Naive thymus-derived CD8-positive, alpha-beta T cell (primary cell): ENCODE measurements at regions of chr12 and their contacts with region 1.

Region 1: GRCh38 chr12:56104109-56104814 is at the start of gene PA2G4:
- DNase-seq: peak; percentile 82 to 99 (median 94)
- ATAC-seq: peak; percentile 88
- H3K4me3 Mint-ChIP-seq: peak within 1 kb of the TSS; percentile 93 to 100 (median 98)
- H3K27ac Mint-ChIP-seq: peak within 1 kb of the TSS; percentile 97 to 99 (median 98)
- H3K4me1 Mint-ChIP-seq: peaks cover 35 to 73% (median 62%) of the 10 kb centered on the region in 4 donors
- H3K27me3 Mint-ChIP-seq: no peaks in the 10 kb centered on the region
- polyA plus RNA-seq, gene PA2G4: 219 to 241 (median 241) TPM

Region 2: DNA sequence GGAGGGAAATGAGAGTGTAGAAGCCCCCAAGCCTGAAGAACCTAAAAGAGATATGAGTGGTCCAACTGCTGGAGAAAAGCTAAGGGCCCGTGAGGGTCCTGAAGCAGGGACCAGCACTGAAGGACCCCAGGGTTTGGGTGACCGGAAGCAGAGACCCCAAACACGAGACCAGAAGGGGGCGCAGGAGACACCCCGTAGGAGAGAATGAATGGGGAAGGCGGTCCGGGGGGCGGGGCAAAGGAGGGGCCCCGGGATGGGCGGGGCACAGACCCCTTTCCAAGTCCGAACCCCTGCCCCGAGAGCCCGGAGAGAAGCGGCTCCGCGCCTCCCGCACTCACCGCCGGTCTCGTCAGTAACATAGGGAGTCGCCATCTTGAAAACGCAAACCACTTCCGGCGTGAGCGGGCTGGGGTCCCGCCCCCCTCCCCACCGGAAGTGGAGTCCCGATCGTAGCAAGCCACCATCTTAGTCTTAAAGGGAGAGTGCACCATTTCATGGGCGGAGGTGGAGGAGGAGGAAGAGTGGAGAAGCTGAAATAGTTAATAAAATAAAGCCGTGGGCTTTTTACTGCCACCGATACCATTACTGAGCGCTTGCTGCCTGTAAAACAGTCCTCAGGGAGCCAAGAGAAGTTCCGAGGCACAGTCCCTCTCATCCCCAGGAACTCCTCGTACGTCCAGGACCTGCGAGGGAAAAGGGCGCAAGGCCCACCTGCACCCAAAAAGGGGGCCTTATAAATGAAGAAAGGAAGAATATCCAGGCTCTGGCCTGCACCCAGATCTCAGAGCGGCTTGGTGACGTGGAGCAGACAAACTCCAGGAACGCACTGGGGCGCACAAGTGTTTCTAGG is 177.3 kb before region 1 on chr12:
- POLR2A ChIA-PET with region 1: interaction called, 32 read pairs
- DNase-seq: peak; percentile 77 to 96 (median 88)
- ATAC-seq: peak; percentile 41 to 46
- H3K4me3 Mint-ChIP-seq: peak overlapping the region; percentile 92 to 100 (median 98)
- H3K27ac Mint-ChIP-seq: peak overlapping the region; percentile 95 to 100 (median 98)
- H3K4me1 Mint-ChIP-seq: peaks cover 34 to 67% (median 51%) of the 10 kb centered on the region in 4 donors
- H3K27me3 Mint-ChIP-seq: no peaks in the 10 kb centered on the region

Region 3: DNA sequence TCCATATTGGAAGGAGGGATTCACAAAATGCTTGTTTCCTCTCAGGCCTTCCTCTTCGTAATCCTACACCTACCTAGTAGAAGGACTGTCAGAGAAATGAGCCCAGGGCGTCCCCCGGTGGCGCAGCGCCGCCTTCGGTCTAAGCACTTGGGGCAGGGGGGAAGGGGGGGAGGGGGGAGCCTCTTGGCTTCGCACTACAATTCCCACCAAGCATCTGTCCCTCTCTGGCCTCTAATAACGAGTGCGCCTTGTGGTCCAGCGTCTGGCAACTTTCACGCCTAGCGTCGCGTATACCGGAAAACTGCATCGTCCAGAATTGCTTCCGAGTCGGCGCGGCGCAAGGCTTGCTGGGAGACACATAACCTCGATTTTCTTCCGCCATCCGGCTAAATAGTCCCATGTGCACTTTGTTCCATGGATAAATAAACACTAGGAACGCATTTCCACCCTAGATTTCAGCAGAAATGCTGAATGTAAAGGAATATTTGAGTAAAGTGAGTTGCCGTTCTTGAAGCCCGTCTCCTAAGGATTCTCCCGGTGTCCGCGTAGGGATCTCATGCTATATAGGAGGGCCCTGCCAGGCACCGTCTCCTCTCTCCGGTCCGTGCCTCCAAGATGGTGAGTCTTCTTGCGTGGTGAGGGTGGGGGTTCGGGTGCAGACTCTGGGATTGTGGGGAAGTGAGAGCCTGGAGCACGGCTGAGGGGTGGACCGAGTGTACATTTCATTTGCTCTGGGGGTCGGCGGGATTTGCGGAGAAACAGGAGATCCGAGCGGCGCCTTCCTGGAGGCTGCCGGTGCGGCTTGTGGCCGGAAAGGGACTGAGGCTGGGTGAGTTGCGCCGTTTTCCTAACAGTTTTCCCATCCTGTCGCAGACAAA is 62.5 kb before region 1 on chr12 and contains the start of gene RPS26:
- POLR2A ChIA-PET with region 1: interaction called, 38 read pairs
- DNase-seq: peak; percentile 81 to 98 (median 90)
- ATAC-seq: peak; percentile 89
- H3K4me3 Mint-ChIP-seq: peak within 1 kb of the TSS; percentile 90 to 100 (median 99)
- H3K27ac Mint-ChIP-seq: peak within 1 kb of the TSS; percentile 95 to 100 (median 99)
- H3K4me1 Mint-ChIP-seq: peaks cover 13 to 37% (median 32%) of the 10 kb centered on the region in 4 donors
- H3K27me3 Mint-ChIP-seq: no peaks in the 10 kb centered on the region
- polyA plus RNA-seq, gene RPS26: 743 to 1,060 (median 810) TPM

Region 4: GRCh38 chr12:56084958-56085543 is 19.2 kb before region 1 on chr12:
- POLR2A ChIA-PET with region 1: interaction called, 100 read pairs
- DNase-seq: peak in 1 of 10 donors; percentile 4
- ATAC-seq: peak in 1 of 2 donors; percentile 31
- H3K4me3 Mint-ChIP-seq: no peak overlapping the region
- H3K27ac Mint-ChIP-seq: peak overlapping the region in 2 of 10 donors; percentile 43 to 56
- H3K4me1 Mint-ChIP-seq: peaks cover 0 to 14% (median 8%) of the 10 kb centered on the region in 4 donors
- H3K27me3 Mint-ChIP-seq: peaks cover 0 to 6% (median 0%) of the 10 kb centered on the region in 5 donors

Region 5: GRCh38 chr12:56158029-56158925 is 54.0 kb after region 1 on chr12 and contains the start of gene MYL6:
- POLR2A ChIA-PET with region 1: interaction called, 11 read pairs
- DNase-seq: peak; percentile 72 to 97 (median 90)
- ATAC-seq: peak; percentile 85 to 87
- H3K4me3 Mint-ChIP-seq: peak within 1 kb of the TSS; percentile 93 to 99 (median 98)
- H3K27ac Mint-ChIP-seq: peak within 1 kb of the TSS; percentile 95 to 100 (median 98)
- H3K4me1 Mint-ChIP-seq: peaks cover 32 to 54% (median 49%) of the 10 kb centered on the region in 4 donors
- H3K27me3 Mint-ChIP-seq: no peaks in the 10 kb centered on the region
- polyA plus RNA-seq, gene MYL6: 1,813 to 2,533 (median 2,044) TPM

Region 6: GRCh38 chr12:56172831-56173230 is 68.6 kb after region 1 on chr12:
- POLR2A ChIA-PET with region 1: no interaction called
- DNase-seq: peak in 1 of 10 donors; percentile 4
- ATAC-seq: no peak
- H3K4me3 Mint-ChIP-seq: no peak overlapping the region
- H3K27ac Mint-ChIP-seq: peak overlapping the region in 3 of 10 donors; percentile 24 to 80 (median 29)
- H3K4me1 Mint-ChIP-seq: no peaks in the 10 kb centered on the region
- H3K27me3 Mint-ChIP-seq: no peaks in the 10 kb centered on the region

Region 7: DNA sequence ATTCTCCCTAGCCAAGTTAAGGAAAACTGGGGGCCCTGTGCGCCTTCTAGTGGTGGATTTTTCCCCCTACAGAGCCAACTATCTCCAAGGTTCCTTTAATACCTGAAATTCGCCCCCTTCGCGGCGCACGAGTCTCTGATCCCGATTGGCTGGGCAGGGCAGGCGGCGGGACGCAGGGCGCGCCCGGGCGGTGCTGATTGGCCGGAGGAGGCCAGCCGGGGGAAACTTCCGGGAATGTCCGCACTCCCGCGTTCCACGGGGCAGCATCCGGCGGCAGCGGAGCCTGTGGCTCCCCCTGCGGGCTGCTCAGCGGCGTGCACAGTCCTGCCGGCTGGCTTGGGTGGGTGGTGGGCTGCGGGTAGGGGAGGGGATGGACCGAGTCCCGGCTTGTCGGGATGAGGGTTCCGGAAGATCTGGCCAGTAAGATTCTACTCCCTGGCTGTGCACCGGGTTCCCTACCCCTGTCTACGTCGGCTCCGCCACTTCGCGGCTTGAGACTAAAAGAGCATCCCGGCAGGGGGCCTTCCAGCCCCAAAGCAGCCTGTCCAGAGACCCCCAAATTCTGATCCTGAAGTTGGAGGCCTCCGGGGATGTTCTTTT is 119.9 kb after region 1 on chr12 and contains the start of gene NABP2:
- POLR2A ChIA-PET with region 1: interaction called, 23 read pairs
- DNase-seq: peak; percentile 77 to 94 (median 86)
- ATAC-seq: peak; percentile 75 to 79
- H3K4me3 Mint-ChIP-seq: peak within 1 kb of the TSS; percentile 83 to 100 (median 97)
- H3K27ac Mint-ChIP-seq: peak within 1 kb of the TSS; percentile 71 to 100 (median 98)
- H3K4me1 Mint-ChIP-seq: peaks cover 27 to 53% (median 47%) of the 10 kb centered on the region in 4 donors
- H3K27me3 Mint-ChIP-seq: no peaks in the 10 kb centered on the region
- polyA plus RNA-seq, gene NABP2: 3.5 to 3.9 (median 3.7) TPM

Region 8: DNA sequence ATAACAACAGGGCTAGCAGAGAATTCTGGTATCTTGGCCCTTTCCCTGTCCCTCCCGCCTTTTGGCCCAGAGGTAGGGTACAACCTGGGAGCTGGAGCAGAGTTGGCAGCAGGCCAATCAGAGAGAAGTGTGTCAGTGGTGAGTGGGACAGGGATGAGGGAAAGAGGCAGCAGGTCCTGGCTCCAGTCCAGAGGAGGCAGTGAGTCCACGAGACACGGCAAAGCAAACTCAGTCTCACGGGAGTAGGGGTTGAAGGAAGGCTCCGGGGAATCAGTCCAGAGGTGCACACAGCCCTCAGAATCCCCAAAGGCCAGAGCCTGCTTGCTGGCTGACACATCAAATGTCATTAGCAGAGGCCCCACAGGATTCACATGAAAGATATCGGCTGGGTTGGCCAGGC is 222.3 kb after region 1 on chr12:
- POLR2A ChIA-PET with region 1: no interaction called
- DNase-seq: no peak
- ATAC-seq: no peak
- H3K4me3 Mint-ChIP-seq: no peak overlapping the region
- H3K27ac Mint-ChIP-seq: peak overlapping the region in 2 of 10 donors; percentile 51 to 60
- H3K4me1 Mint-ChIP-seq: peaks cover 3 to 6% (median 5%) of the 10 kb centered on the region in 4 donors
- H3K27me3 Mint-ChIP-seq: no peaks in the 10 kb centered on the region